ENCODE measurements at regions of chr15 and their contacts with region 1.

Region 1: DNA sequence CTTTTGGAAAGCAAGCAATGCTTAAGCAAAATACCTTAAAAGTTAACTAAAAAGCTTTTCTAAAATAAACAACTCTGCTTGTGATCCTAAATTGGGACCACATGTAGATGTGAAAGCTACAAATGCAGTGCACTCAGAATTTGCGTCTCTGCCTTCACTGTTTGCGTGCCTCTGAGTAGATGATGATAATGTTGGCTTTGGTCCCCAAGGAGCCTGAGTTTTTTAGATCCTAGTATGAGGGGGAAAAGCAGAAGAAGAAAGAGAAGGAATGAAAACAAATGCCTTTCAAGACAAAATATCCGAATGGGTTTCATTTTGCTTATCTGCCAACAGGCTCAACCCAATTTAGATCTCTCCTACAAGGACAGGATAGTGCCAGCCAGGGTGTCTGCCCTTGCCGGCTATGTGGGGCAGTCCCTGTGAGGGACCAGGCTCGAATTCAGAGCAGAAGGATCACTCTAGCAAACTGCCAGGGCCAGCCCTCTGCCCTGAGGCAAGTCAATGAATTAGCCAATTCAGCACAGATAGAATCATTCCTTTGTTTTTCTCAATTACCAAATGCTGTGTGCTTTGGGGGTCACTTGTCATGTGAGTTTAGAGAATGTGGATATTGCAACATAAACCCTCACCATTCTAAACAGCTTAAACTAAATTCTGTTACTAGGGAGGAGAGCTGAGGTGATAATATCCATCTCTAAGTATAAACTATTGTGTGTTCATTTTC is 28.5 kb downstream of the SCG5 start:
- DNase-seq: peak; percentile 44 to 67 (median 65)
- ATAC-seq: peak; percentile 75 to 79
- H3K4me3 ChIP-seq: no peak overlapping the region
- H3K27ac ChIP-seq: no peak overlapping the region
- H3K4me1 ChIP-seq: no peaks in the 10 kb centered on the region
- H3K27me3 ChIP-seq: no peaks in the 10 kb centered on the region

Region 2: GRCh38 chr15:32730677-32731654 is 60.9 kb after region 1 on chr15:
- intact Hi-C with region 1: loop called in 1 of 4 experiments (anchors 10 kb)
- DNase-seq: peak; percentile 20 to 64 (median 48)
- ATAC-seq: no peak
- H3K4me3 ChIP-seq: no peak overlapping the region
- H3K27ac ChIP-seq: no peak overlapping the region
- H3K4me1 ChIP-seq: no peaks in the 10 kb centered on the region
- H3K27me3 ChIP-seq: no peaks in the 10 kb centered on the region

Region 3: GRCh38 chr15:33021806-33022389 is 351.8 kb after region 1 on chr15:
- intact Hi-C with region 1: no loop called
- DNase-seq: no peak
- ATAC-seq: peak; percentile 72 to 74
- H3K4me3 ChIP-seq: no peak overlapping the region
- H3K27ac ChIP-seq: no peak overlapping the region
- H3K4me1 ChIP-seq: peaks cover 3% of the 10 kb centered on the region
- H3K27me3 ChIP-seq: no peaks in the 10 kb centered on the region

Region 4: DNA sequence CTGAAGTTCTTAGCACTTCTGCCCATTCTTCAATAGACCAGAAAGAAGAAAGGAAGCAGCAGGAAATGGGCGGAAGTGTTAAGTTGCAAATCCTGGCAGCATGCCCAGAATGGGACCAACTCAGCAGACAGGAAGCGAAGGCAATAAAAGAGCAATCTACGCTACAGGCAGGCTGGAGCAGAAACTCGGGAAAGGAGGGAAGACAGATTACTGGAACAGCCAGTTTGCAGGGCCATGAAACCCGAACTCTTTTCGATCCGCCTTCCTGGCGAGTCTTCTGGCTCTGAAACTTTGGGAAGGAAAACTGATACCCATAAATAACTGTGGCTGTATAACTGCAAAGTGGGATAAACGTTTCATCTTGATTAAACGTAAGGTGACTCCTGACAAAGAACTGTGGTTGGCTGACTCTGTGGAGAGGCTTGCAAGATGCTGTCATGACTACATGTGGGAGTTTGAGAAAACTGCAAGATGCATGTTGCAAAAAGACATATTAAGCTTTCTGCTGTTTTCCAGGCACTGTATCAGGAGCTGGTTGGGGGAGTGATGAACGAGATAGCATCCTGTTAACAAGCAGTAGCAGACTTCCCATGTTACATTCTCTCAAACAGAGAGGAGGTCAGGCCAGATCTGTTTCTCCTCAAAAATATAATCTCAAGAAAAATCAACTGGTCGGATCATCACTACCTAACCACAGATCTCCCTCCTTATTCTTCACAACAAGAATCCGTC is 456.7 kb after region 1 on chr15:
- intact Hi-C with region 1: no loop called
- DNase-seq: peak; percentile 76 to 88 (median 80)
- ATAC-seq: peak; percentile 75 to 81
- H3K4me3 ChIP-seq: no peak overlapping the region
- H3K27ac ChIP-seq: no peak overlapping the region
- H3K4me1 ChIP-seq: no peaks in the 10 kb centered on the region
- H3K27me3 ChIP-seq: no peaks in the 10 kb centered on the region

Measured in right cardiac atrium (tissue), 5 donors.